ENCODE measurements at regions of chr3 and their contacts with region 1.

Region 1: DNA sequence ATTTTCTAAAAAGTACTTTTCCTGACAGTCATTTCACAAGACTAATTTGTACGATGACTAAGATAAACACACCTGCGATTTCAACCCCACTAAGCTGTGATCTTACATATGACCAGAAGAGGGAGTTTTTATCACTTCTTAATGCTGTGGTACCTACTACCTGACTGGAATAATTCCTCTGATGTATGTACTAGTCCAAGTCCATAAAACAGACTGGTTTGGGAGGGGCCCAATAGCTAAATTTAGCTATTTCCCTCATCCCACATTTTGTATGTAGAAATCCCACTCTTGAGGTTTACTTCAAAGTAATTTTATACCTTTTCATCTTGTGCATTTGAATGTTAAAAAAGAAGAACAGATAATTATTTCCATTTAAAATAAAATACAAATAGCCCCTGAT is 49.7 kb upstream of the SCAANT1 start:
- DNase-seq: peak in 2 of 9 experiments; percentile 69 to 80
- ATAC-seq: peak; percentile 98
- H3K4me3 ChIP-seq: no peak overlapping the region
- H3K4me3 Mint-ChIP-seq: no peak overlapping the region
- H3K27ac ChIP-seq: no peak overlapping the region
- H3K27ac Mint-ChIP-seq: no peak overlapping the region
- H3K4me1 ChIP-seq: peaks cover 16% of the 10 kb centered on the region
- H3K4me1 Mint-ChIP-seq: peaks cover 48% of the 10 kb centered on the region
- H3K27me3 ChIP-seq: no peaks in the 10 kb centered on the region
- H3K27me3 Mint-ChIP-seq: no peaks in the 10 kb centered on the region
- CTCF ChIP-seq: peak; percentile 83

Region 2: GRCh38 chr3:63975723-63976122 is 13.8 kb after region 1 on chr3:
- CTCF ChIA-PET with region 1: interaction called, 169 read pairs
- POLR2A ChIA-PET with region 1: interaction called, 95 read pairs
- intact Hi-C with region 1: loop called (anchors 2 kb)
- DNase-seq: no peak
- ATAC-seq: no peak
- H3K4me3 ChIP-seq: no peak overlapping the region
- H3K4me3 Mint-ChIP-seq: peak overlapping the region; percentile 42
- H3K27ac ChIP-seq: no peak overlapping the region
- H3K27ac Mint-ChIP-seq: peak overlapping the region; percentile 87
- H3K4me1 ChIP-seq: peaks cover 95% of the 10 kb centered on the region
- H3K4me1 Mint-ChIP-seq: peaks cover 98% of the 10 kb centered on the region
- H3K27me3 ChIP-seq: no peaks in the 10 kb centered on the region
- H3K27me3 Mint-ChIP-seq: no peaks in the 10 kb centered on the region
- CTCF ChIP-seq: no peak

Region 3: GRCh38 chr3:64003589-64003988 is 41.7 kb after region 1 on chr3:
- CTCF ChIA-PET with region 1: interaction called, 313 read pairs
- POLR2A ChIA-PET with region 1: no interaction called
- intact Hi-C with region 1: no loop called
- DNase-seq: no peak
- ATAC-seq: no peak
- H3K4me3 ChIP-seq: no peak overlapping the region
- H3K4me3 Mint-ChIP-seq: no peak overlapping the region
- H3K27ac ChIP-seq: no peak overlapping the region
- H3K27ac Mint-ChIP-seq: peak overlapping the region; percentile 1
- H3K4me1 ChIP-seq: no peaks in the 10 kb centered on the region
- H3K4me1 Mint-ChIP-seq: peaks cover 19% of the 10 kb centered on the region
- H3K27me3 ChIP-seq: no peaks in the 10 kb centered on the region
- H3K27me3 Mint-ChIP-seq: no peaks in the 10 kb centered on the region
- CTCF ChIP-seq: no peak

Region 4: DNA sequence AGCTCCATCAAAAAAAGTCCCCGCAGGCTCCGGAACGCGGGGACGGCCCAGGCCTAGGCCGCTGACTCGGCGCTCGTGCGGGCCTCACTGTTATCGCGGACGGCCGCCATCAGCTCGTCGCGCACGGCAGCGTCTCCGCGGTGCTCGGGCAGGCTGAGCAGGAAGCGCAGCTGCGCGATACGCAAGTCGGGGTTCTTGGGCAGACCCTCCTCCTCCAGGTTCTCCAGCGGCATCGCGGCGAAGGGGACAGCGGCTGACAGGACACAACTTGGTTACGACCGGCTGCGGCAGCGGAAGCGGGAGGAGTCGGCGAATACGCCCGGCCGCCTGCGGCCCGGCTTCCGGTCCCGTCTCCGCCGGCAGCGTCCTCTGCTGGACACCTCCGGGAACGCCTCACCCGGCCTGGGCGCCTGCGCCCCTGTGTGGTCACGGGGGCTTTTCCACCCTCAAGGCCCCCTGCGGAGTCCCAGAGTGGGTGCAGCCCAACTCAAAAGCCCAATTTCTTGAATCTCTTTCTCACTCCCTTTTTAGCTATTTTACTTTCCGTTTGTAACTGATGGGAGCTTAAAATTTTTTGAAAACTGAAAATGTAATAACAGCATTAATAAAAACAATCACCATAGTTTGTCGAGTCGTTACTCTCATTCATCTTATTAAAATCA is 61.4 kb after region 1 on chr3 and contains the start of gene PSMD6:
- CTCF ChIA-PET with region 1: interaction called, 50 read pairs
- POLR2A ChIA-PET with region 1: interaction called, 18 read pairs
- intact Hi-C with region 1: loop called in 1 of 2 experiments (anchors 1 kb)
- DNase-seq: peak; percentile 86 to 96 (median 93)
- ATAC-seq: peak; percentile 94
- H3K4me3 ChIP-seq: peak within 1 kb of the TSS; percentile 90 to 96
- H3K4me3 Mint-ChIP-seq: peak within 1 kb of the TSS; percentile 91
- H3K27ac ChIP-seq: peak within 1 kb of the TSS; percentile 86 to 89
- H3K27ac Mint-ChIP-seq: peak within 1 kb of the TSS; percentile 93
- H3K4me1 ChIP-seq: peaks cover 29% of the 10 kb centered on the region
- H3K4me1 Mint-ChIP-seq: peaks cover 33% of the 10 kb centered on the region
- H3K27me3 ChIP-seq: no peaks in the 10 kb centered on the region
- H3K27me3 Mint-ChIP-seq: peaks cover 14% of the 10 kb centered on the region
- CTCF ChIP-seq: peak; percentile 99
- total RNA-seq, gene PSMD6: 134 to 138 TPM

Measured in CD8-positive, alpha-beta T cell (primary cell).